Spleen (tissue), 13 donors: ENCODE measurements at regions of chr14 and their contacts with region 1.

Region 1: GRCh38 chr14:75654127-75654732 is 6.4 kb downstream of the ERG28 start:
- DNase-seq: peak; percentile 91
- H3K4me3 ChIP-seq: no peak overlapping the region
- H3K27ac ChIP-seq: no peak overlapping the region
- H3K4me1 ChIP-seq: peaks cover 3 to 25% (median 6%) of the 10 kb centered on the region in 6 donors
- H3K27me3 ChIP-seq: no peaks in the 10 kb centered on the region
- CTCF ChIP-seq: peak; percentile 81 to 97 (median 93)
- POLR2A ChIP-seq: no peak

Region 2: DNA sequence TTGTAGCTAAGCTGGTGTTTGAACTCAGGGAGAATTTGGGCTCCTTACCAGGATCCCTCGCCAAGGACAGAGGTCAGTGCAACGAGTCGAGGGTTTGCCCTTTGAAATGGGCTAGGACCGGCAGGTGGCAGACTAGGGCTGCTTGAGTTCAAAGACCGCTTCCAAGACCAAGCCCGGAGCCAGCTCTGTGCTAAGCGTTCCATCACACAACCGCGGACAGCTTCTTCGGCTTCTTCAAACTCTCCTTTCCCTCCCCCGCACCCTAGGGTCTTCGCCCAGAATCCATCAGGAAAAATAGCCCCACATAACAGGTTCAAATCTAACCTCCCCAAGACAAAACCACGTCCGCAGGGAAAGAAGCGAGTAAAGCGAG is 76.5 kb before region 1 on chr14:
- intact Hi-C with region 1: loop called (anchors 2 kb)
- DNase-seq: peak; percentile 92
- H3K4me3 ChIP-seq: peak overlapping the region; percentile 39 to 87 (median 58)
- H3K27ac ChIP-seq: peak overlapping the region; percentile 4 to 85 (median 78)
- H3K4me1 ChIP-seq: peaks cover 8 to 43% (median 27%) of the 10 kb centered on the region in 6 donors
- H3K27me3 ChIP-seq: no peaks in the 10 kb centered on the region
- CTCF ChIP-seq: peak; percentile 26 to 82 (median 73)
- POLR2A ChIP-seq: no peak